HEK293 (cell line): ENCODE measurements at regions of chr9 and their contacts with region 1.

Region 1: GRCh38 chr9:8895861-8896224 is 1096.3 kb upstream of the DMAC1 start:
- H3K4me3 ChIP-seq: no peak overlapping the region
- H3K27ac ChIP-seq: no peak overlapping the region
- H3K4me1 ChIP-seq: no peaks in the 10 kb centered on the region
- CTCF ChIP-seq: no peak

Region 2: DNA sequence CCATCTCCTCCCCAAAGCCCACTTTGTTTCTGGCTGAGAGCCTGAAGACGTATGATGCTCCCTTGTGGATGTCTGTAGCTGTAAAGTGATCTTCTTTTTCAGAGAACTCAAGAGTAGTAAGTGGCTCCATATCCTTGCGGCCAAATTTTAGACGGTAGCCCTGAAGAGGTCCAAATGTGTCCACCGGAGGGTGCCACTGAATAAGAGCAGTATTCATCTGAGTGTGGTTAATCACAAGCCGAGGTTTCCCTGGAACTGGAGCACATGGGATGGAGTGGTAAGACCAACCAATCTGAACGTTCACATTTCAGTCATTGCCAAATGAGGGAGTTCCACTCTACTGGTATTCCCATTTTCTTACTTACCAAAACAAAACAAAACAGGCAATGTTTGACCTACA is 409.7 kb before region 1 on chr9:
- CTCF ChIA-PET with region 1: interaction called, 13 read pairs
- POLR2A ChIA-PET with region 1: no interaction called
- H3K4me3 ChIP-seq: no peak overlapping the region
- H3K27ac ChIP-seq: no peak overlapping the region
- H3K4me1 ChIP-seq: no peaks in the 10 kb centered on the region
- CTCF ChIP-seq: no peak

Region 3: DNA sequence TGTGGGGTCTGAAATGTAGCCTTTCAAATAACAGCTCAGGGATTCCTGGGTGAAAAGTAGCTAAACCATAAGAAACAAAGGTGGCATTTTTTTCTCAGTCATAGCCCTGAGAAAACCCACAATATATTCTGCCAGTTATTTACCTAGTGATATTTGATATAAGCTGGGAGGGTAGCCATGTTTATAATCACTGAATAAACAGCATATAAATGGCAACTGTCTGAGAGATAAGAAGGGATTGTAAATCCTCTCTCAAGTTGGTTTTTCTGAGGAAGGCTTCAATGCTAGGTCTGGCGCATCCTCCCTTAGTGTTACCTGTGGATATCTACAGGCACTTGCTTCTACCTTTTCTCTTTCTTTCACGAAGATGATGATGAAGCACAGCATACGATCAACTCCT is 15.8 kb before region 1 on chr9:
- CTCF ChIA-PET with region 1: interaction called, 17 read pairs
- POLR2A ChIA-PET with region 1: no interaction called
- H3K4me3 ChIP-seq: no peak overlapping the region
- H3K27ac ChIP-seq: no peak overlapping the region; the same call in 1 of the 2 replicates
- H3K4me1 ChIP-seq: peaks cover 4% of the 10 kb centered on the region; the same call in 1 of the 2 replicates
- CTCF ChIP-seq: no peak

Region 4: GRCh38 chr9:8907863-8908262 is 12.0 kb after region 1 on chr9:
- CTCF ChIA-PET with region 1: interaction called, 15 read pairs
- POLR2A ChIA-PET with region 1: no interaction called
- H3K4me3 ChIP-seq: no peak overlapping the region
- H3K27ac ChIP-seq: no peak overlapping the region
- H3K4me1 ChIP-seq: no peaks in the 10 kb centered on the region
- CTCF ChIP-seq: no peak

Region 5: GRCh38 chr9:9002826-9003583 is 107.2 kb after region 1 on chr9:
- CTCF ChIA-PET with region 1: interaction called, 12 read pairs
- POLR2A ChIA-PET with region 1: no interaction called
- H3K4me3 ChIP-seq: no peak overlapping the region
- H3K27ac ChIP-seq: no peak overlapping the region
- H3K4me1 ChIP-seq: no peaks in the 10 kb centered on the region
- CTCF ChIP-seq: no peak

Region 6: DNA sequence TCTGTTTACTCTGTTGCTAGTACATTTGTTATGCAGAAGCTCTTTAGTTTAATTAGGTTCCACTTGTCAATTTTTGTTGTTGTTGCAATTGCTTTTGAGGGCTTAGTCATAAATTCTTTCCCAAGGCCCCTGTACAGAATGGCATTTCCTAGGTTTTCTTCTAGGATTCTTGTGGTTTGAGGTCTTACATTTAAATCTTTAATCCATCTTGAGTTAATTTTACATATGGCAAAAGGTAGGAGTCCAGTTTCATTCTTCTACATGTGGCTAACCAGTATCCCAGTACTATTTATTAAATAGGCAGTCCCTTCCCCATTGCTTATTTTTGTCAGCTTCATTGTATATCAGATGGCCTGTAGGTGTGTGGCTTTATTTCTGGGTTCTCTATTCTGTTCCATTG is 924.6 kb after region 1 on chr9:
- CTCF ChIA-PET with region 1: no interaction called
- POLR2A ChIA-PET with region 1: no interaction called
- H3K4me3 ChIP-seq: no peak overlapping the region
- H3K27ac ChIP-seq: no peak overlapping the region
- H3K4me1 ChIP-seq: no peaks in the 10 kb centered on the region
- CTCF ChIP-seq: no peak